ENCODE measurements at regions of chr9 and their contacts with region 1.

Region 1: DNA sequence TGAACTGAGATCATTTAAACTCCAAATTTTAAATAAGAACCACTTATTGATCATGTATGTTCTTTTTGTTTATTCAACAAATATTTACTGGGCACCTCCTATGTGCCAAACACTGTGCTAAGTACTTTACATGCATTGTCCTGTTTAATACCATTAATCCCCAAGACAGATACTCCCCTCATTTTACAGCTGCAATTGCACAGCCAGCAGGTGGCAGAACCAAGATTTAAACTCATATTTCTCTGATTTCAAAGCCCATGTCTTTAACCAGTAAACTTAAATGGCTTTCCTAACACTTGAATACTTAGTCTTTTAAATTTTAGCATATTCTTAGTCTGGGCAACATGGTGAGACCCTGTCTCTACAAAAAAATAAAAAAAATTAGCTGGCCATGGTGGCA is 43.4 kb upstream of the KIAA1958 start:
- H3K4me3 Mint-ChIP-seq: no peak overlapping the region
- H3K27ac Mint-ChIP-seq: no peak overlapping the region
- H3K4me1 Mint-ChIP-seq: peaks cover 27% of the 10 kb centered on the region
- H3K27me3 Mint-ChIP-seq: no peaks in the 10 kb centered on the region

Region 2: DNA sequence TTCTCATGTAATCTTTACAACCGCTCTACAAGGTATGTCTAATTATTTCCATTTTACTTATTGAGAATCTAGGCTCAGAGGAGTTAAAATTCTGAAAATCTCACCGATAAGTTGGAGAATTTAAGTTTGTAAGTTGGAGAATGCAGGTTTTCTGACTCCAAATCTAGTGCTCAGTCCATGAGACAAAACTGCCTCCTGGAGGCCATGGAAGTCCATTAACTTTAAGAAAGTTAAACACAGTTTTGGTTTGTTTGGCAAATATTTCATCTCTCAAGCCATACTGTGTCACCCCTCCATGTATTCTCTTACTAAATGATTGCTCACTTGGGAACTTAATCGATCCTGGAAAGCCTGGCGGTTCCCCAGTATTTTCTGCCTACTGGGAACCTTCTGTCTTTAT is 222.1 kb after region 1 on chr9:
- intact Hi-C with region 1: loop called (anchors 5 kb)
- H3K4me3 Mint-ChIP-seq: no peak overlapping the region
- H3K27ac Mint-ChIP-seq: no peak overlapping the region
- H3K4me1 Mint-ChIP-seq: no peaks in the 10 kb centered on the region
- H3K27me3 Mint-ChIP-seq: no peaks in the 10 kb centered on the region

Region 3: GRCh38 chr9:112793213-112793810 is 350.1 kb after region 1 on chr9:
- intact Hi-C with region 1: loop called (anchors 10 kb)
- H3K4me3 Mint-ChIP-seq: no peak overlapping the region
- H3K27ac Mint-ChIP-seq: no peak overlapping the region
- H3K4me1 Mint-ChIP-seq: peaks cover 58% of the 10 kb centered on the region
- H3K27me3 Mint-ChIP-seq: no peaks in the 10 kb centered on the region

Measured in dendritic cell treated with granulocyte-macrophage colony-stimulating factor and Interleukin-4, amounts not matched to agents 40 ng/mL and 50 ng/mL, for 4 days (primary cell).